HepG2 (cell line): ENCODE measurements at regions of chr7 and their contacts with region 1.

Region 1: DNA sequence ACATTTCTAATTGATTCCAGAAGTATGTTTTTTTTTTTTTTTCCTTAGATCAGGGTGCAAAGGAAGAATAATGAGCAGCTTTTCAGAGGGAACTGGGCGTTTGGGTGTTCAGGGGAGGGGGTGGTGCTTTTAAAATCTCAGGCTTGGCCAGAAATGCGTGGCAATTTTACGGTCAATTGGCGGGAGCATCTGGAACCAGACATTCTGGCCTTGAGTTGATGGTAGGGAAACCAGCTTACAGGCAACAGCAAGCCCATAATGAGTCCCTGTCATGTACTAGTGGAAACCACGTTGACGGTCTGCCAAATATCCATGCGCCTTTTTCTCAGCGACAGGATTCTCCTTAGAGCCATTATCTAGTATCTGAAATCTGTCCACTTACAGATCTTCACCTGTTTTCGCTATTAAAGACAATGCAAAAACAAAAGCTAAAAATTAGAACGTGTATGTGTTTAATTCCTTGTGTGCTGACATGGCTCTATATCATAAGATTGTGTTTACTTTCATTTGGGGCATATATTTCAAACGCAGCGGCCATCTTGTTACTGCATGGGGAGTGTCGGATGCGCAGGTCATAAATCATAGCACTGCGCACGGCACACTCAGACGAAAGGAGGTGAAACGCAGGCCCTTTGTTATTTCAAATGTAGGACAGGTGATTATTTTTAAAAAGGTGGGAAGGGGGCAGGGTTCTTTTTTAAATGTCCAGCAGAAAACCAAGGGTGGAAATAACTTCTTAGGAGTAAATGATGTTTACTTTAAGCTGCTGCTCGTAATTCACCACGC is 209.2 kb downstream of the AGMO start:
- DNase-seq: no peak
- ATAC-seq: no peak
- H3K4me3 ChIP-seq: no peak overlapping the region
- H3K27ac ChIP-seq: no peak overlapping the region
- H3K4me1 ChIP-seq: no peaks in the 10 kb centered on the region
- H3K27me3 ChIP-seq: no peaks in the 10 kb centered on the region
- CTCF ChIP-seq: no peak
- EP300 ChIP-seq: no peak
- POLR2A ChIP-seq: no peak
- RAD21 ChIP-seq: no peak

Region 2: GRCh38 chr7:15376600-15376999 is 24.0 kb after region 1 on chr7:
- CTCF ChIA-PET with region 1: no interaction called
- POLR2A ChIA-PET with region 1: no interaction called
- in situ Hi-C with region 1: no loop called
- intact Hi-C with region 1: loop called (anchors 1 kb)
- DNase-seq: no peak
- ATAC-seq: peak; percentile 44; the same call in 2 of the 3 replicates
- H3K4me3 ChIP-seq: no peak overlapping the region
- H3K27ac ChIP-seq: no peak overlapping the region
- H3K4me1 ChIP-seq: no peaks in the 10 kb centered on the region
- H3K27me3 ChIP-seq: no peaks in the 10 kb centered on the region
- CTCF ChIP-seq: no peak
- EP300 ChIP-seq: no peak
- POLR2A ChIP-seq: no peak
- RAD21 ChIP-seq: no peak